Kidney (tissue), 22 donors: ENCODE measurements at regions of chr12 and their contacts with region 1.

Region 1: GRCh38 chr12:110600254-110600653 is 13.7 kb upstream of the TCTN1 start:
- DNase-seq: peak in 1 of 5 donors; percentile 54
- H3K4me3 ChIP-seq: no peak overlapping the region
- H3K27ac ChIP-seq: no peak overlapping the region
- H3K4me1 ChIP-seq: no peaks in the 10 kb centered on the region
- H3K27me3 ChIP-seq: no peaks in the 10 kb centered on the region
- CTCF ChIP-seq: peak; percentile 36

Region 2: DNA sequence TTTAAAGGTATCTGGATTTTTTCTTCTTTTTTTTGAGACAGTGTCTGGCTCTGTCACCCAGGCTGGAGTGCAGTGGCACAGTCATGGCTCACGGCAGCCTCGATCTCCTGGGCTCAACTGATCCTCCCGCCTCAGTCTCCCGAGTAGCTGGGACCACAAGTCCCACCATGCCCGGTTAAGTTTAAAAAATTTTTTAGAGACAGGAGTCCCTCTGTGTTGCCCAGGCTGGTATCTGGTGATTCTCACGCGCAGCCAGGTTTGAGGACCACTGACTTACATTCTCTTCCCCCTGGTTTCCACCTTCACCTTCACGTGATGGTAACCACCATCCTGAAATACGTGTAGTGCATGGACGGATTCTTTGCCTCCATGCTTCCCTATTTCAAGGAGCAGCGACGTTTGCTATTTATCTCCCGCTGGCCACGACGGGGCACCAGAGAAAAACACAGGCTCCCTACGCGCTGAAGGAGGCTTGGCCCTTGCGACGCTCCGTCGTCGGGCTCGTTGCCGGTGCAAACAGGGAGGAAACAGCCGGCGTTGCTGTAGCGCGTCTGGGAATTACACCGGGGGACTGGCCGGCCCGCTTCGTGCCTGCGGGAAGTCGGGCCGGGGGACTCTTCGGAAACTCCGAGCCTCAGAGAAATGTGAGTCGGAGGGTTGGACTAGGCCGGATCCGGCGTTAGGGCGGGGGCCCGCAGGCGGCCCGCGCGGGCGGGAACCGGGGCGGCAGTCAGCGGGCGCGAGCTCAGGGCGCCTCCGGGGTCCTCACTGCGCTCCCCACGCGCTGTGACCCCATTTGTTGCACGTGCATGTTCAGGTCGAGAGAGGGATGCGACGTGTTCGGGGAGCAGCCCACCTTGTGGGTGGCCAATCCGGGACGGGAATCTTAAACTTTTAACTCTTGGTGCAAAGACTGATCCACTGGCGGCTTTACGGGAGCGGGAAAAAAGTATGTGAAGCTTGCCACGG is 700.2 kb before region 1 on chr12 and contains the start of gene TCHP:
- intact Hi-C with region 1: no loop called
- DNase-seq: peak; percentile 88 to 97 (median 93)
- H3K4me3 ChIP-seq: peak within 1 kb of the TSS; percentile 81 to 88 (median 85)
- H3K27ac ChIP-seq: peak within 1 kb of the TSS in 1 of 2 donors; percentile 78
- H3K4me1 ChIP-seq: peaks cover 0 to 8% (median 0%) of the 10 kb centered on the region in 3 donors
- H3K27me3 ChIP-seq: no peaks in the 10 kb centered on the region
- CTCF ChIP-seq: peak; percentile 33
- total RNA-seq, gene TCHP: 16.2 TPM

Region 3: GRCh38 chr12:110039085-110039807 is 561.0 kb before region 1 on chr12:
- intact Hi-C with region 1: no loop called
- DNase-seq: no peak
- H3K4me3 ChIP-seq: no peak overlapping the region
- H3K27ac ChIP-seq: peak overlapping the region; percentile 30 to 76
- H3K4me1 ChIP-seq: peaks cover 0 to 15% (median 4%) of the 10 kb centered on the region in 3 donors
- H3K27me3 ChIP-seq: no peaks in the 10 kb centered on the region
- CTCF ChIP-seq: no peak

Region 4: DNA sequence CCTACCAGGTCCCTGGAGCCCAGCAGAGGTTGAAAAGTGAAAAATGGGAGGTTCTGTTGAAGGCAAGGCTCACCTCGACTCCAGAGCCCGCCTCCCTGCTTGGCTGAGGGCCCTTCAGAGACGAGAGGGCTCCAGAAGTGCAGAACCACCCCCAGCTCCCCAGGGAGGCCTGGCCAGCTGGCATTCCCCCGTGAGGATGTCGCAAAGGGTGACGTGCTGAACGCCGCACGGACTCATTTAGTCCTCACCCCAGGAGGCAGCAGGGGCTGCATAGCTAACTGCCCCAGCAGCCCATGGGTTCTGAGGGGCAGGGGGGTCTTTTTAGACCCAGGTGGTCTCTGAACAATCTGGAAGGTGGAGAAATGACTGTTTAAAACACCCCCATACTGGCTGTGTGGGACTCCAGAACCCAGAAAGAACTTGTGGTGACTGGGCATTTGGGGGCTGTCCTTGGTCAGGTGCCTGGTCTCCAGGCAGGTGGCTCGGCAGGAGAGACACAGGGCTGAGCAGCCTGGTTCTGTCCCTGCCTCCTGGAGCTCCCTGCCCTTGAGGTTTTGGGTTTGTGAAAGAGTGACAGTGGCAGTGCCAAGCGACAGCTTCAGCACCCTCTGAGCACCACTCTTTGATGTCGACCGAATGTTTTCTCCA is 228.7 kb before region 1 on chr12:
- intact Hi-C with region 1: no loop called
- DNase-seq: no peak
- H3K4me3 ChIP-seq: no peak overlapping the region
- H3K27ac ChIP-seq: no peak overlapping the region
- H3K4me1 ChIP-seq: no peaks in the 10 kb centered on the region
- H3K27me3 ChIP-seq: no peaks in the 10 kb centered on the region
- CTCF ChIP-seq: no peak

Region 5: DNA sequence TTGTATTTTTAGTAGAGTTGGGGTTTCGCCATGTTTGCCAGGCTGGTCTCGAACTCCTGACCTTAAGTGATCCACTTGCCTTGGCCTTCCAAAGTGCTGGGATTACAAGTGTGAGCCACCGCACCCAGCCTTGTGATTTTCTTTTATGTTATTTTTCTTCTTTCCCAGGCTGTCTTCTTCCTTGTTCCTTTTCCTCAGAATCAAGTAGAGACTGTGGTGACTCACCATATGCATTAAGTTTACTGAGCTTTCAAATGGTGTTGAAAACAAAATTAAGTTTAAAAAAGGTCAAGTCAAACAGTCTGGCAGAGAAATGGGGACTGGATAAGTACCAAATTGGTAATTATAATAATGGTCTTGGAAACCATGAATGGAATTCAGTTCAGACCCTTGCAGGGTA is 155.8 kb before region 1 on chr12:
- intact Hi-C with region 1: no loop called
- DNase-seq: no peak
- H3K4me3 ChIP-seq: no peak overlapping the region
- H3K27ac ChIP-seq: no peak overlapping the region
- H3K4me1 ChIP-seq: peaks cover 0 to 2% (median 0%) of the 10 kb centered on the region in 3 donors
- H3K27me3 ChIP-seq: no peaks in the 10 kb centered on the region
- CTCF ChIP-seq: no peak

Region 6: DNA sequence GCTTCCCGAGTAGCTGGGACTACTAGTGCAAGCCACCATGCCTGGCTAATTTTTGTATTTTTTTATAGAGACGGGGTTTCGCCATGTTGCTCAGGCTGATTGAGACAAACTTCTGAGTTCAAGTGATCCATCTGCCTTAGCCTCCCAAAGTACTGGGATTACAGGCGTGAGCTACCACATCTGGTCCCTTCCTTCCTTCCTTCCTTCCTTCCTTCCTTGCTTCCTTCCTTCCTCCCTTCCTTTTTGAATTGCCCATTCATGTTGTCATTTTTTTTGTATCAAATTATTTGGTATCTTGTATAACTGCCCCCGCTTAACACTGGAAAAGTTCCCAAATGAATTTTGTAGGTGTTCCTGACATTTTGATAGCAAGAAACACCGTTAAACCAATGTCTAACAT is 86.4 kb before region 1 on chr12:
- intact Hi-C with region 1: loop called (anchors 5 kb)
- DNase-seq: no peak
- H3K4me3 ChIP-seq: no peak overlapping the region
- H3K27ac ChIP-seq: no peak overlapping the region
- H3K4me1 ChIP-seq: no peaks in the 10 kb centered on the region
- H3K27me3 ChIP-seq: no peaks in the 10 kb centered on the region
- CTCF ChIP-seq: no peak